OCI-LY7 (cell line): ENCODE measurements at regions of chr10 and their contacts with region 1.

Region 1: DNA sequence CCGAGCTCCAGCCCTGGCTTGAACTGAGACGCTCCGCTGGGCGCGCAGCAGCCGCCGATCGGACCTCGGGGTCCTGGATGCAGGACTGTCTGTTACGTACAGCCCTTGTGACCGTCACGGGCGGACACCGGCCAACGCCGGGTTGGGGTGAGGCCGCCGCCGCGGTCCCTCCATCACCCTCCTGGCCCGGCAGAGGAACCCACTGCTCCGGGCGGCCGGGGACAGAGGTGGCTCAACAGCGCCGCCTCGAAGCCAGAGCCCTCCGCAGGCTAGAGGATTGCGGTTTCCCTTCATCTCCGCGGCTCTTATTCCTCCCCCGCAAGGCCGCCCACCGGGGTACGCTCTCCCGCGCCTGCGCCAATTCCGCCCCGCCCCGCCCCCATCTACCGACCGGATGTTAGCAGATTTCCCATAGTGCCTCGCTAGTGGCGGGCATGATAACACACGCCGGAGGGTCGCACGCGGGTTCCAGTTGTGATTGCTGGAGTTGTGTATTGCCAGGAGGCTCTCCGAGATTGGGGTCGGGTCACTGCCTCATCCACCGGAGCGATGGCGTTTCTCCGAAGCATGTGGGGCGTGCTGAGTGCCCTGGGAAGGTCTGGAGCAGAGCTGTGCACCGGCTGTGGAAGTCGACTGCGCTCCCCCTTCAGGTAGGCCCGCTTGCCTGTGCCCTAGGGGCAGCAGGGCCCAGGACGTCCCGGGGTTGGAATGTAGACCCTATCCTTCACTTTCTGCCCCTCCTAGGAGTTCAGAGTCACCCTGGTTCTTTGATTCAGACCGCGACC is at the start of gene TFAM:
- DNase-seq: peak; percentile 91
- H3K4me3 ChIP-seq: peak within 1 kb of the TSS; percentile 94
- H3K27ac ChIP-seq: peak within 1 kb of the TSS; percentile 68
- H3K4me1 ChIP-seq: peaks cover 22% of the 10 kb centered on the region
- CTCF ChIP-seq: peak; percentile 53; the same call in 1 of the 2 replicates
- total RNA-seq, gene TFAM: 62.7 and 71.1 TPM in 2 replicates

Region 2: GRCh38 chr10:58177362-58177947 is 207.7 kb before region 1 on chr10:
- CTCF ChIA-PET with region 1: no interaction called
- POLR2A ChIA-PET with region 1: interaction called, 3 read pairs
- intact Hi-C with region 1: loop called (anchors 10 kb)
- DNase-seq: peak; percentile 35
- H3K4me3 ChIP-seq: no peak overlapping the region
- H3K27ac ChIP-seq: no peak overlapping the region
- H3K4me1 ChIP-seq: no peaks in the 10 kb centered on the region
- CTCF ChIP-seq: peak; percentile 92

Region 3: GRCh38 chr10:58268870-58269605 is 116.2 kb before region 1 on chr10 and contains the start of gene CISD1:
- CTCF ChIA-PET with region 1: no interaction called
- POLR2A ChIA-PET with region 1: interaction called, 8 read pairs
- intact Hi-C with region 1: loop called (anchors 2 kb)
- DNase-seq: peak; percentile 98
- H3K4me3 ChIP-seq: peak within 1 kb of the TSS; percentile 90
- H3K27ac ChIP-seq: peak within 1 kb of the TSS; percentile 82
- H3K4me1 ChIP-seq: peaks cover 24% of the 10 kb centered on the region
- CTCF ChIP-seq: no peak
- total RNA-seq, gene CISD1: 22.4 and 24.1 TPM in 2 replicates

Region 4: GRCh38 chr10:58334817-58335305 is 50.3 kb before region 1 on chr10 and contains the start of gene UBE2D1:
- CTCF ChIA-PET with region 1: no interaction called
- POLR2A ChIA-PET with region 1: interaction called, 11 read pairs
- intact Hi-C with region 1: loop called (anchors 1 kb)
- DNase-seq: peak; percentile 81
- H3K4me3 ChIP-seq: peak within 1 kb of the TSS; percentile 98
- H3K27ac ChIP-seq: no peak within 1 kb of the TSS
- H3K4me1 ChIP-seq: peaks cover 14% of the 10 kb centered on the region
- CTCF ChIP-seq: peak; percentile 42
- total RNA-seq, gene UBE2D1: 4.8 and 6.8 TPM in 2 replicates